Caco-2 (cell line): ENCODE measurements at regions of chr17 and their contacts with region 1.

Region 1: GRCh38 chr17:68457539-68458259 is 403 bp upstream of the WIPI1 start:
- DNase-seq: peak; percentile 99 to 100
- H3K4me3 ChIP-seq: peak overlapping the region; percentile 59
- H3K4me3 Mint-ChIP-seq: peak overlapping the region; percentile 95
- H3K27ac Mint-ChIP-seq: peak overlapping the region; percentile 84
- H3K4me1 ChIP-seq: peaks cover 16% of the 10 kb centered on the region; the same call in 1 of the 2 replicates
- H3K4me1 Mint-ChIP-seq: peaks cover 13% of the 10 kb centered on the region
- H3K27me3 ChIP-seq: no peaks in the 10 kb centered on the region
- H3K27me3 Mint-ChIP-seq: peaks cover 3% of the 10 kb centered on the region
- CTCF ChIP-seq: no peak

Region 2: GRCh38 chr17:68247445-68248198 is 210.1 kb before region 1 on chr17 and contains the start of gene AMZ2:
- CTCF ChIA-PET with region 1: interaction called, 3 read pairs
- POLR2A ChIA-PET with region 1: interaction called, 11 read pairs
- intact Hi-C with region 1: no loop called
- DNase-seq: peak; percentile 93 to 97
- H3K4me3 ChIP-seq: peak within 1 kb of the TSS; percentile 79
- H3K4me3 Mint-ChIP-seq: peak within 1 kb of the TSS; percentile 97
- H3K27ac Mint-ChIP-seq: peak within 1 kb of the TSS; percentile 81
- H3K4me1 ChIP-seq: peaks cover 6% of the 10 kb centered on the region
- H3K4me1 Mint-ChIP-seq: peaks cover 7% of the 10 kb centered on the region
- H3K27me3 ChIP-seq: no peaks in the 10 kb centered on the region
- H3K27me3 Mint-ChIP-seq: peaks cover 12% of the 10 kb centered on the region
- CTCF ChIP-seq: no peak
- total RNA-seq, gene AMZ2: 52.2 and 60.2 TPM in 2 replicates

Region 3: GRCh38 chr17:68497885-68498319 is 40.2 kb after region 1 on chr17:
- CTCF ChIA-PET with region 1: no interaction called
- POLR2A ChIA-PET with region 1: no interaction called
- intact Hi-C with region 1: no loop called
- DNase-seq: no peak
- H3K4me3 ChIP-seq: no peak overlapping the region
- H3K4me3 Mint-ChIP-seq: no peak overlapping the region
- H3K27ac Mint-ChIP-seq: no peak overlapping the region
- H3K4me1 ChIP-seq: no peaks in the 10 kb centered on the region
- H3K4me1 Mint-ChIP-seq: no peaks in the 10 kb centered on the region
- H3K27me3 ChIP-seq: peaks cover 1% of the 10 kb centered on the region; the same call in 1 of the 2 replicates
- H3K27me3 Mint-ChIP-seq: peaks cover 9% of the 10 kb centered on the region
- CTCF ChIP-seq: no peak

Region 4: DNA sequence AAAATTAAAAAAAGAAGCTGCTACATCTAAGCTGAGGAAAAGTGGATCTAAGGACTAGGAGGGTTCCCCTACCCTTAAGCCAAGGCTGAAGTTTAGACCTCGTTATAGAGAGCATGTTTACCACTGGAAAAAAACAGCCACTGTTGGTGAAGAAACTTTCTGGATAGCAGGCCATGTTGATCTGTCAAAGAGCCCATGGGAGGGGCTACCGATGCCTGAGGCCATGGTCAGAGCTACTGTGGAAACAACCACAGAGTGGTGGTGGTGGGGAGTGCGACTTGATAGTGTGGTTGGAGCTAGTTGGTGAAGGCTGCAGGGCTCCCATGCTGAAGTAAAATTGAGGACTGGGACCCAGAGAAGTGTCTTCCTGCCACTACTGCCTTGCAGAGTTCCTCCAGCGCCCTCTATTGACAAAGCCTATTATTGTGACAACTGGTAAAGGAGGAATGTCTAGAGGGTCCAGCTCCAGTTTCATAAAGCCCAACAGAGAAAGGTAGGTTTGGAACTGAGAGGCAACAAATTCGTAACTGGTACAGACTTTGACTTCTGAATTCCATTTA is 156.1 kb after region 1 on chr17:
- CTCF ChIA-PET with region 1: no interaction called
- POLR2A ChIA-PET with region 1: no interaction called
- intact Hi-C with region 1: loop called (anchors 10 kb)
- DNase-seq: peak; percentile 64 to 79
- H3K4me3 ChIP-seq: no peak overlapping the region
- H3K4me3 Mint-ChIP-seq: no peak overlapping the region
- H3K27ac Mint-ChIP-seq: no peak overlapping the region
- H3K4me1 ChIP-seq: no peaks in the 10 kb centered on the region
- H3K4me1 Mint-ChIP-seq: no peaks in the 10 kb centered on the region
- H3K27me3 ChIP-seq: no peaks in the 10 kb centered on the region; the same call in 1 of the 2 replicates
- H3K27me3 Mint-ChIP-seq: peaks cover 4% of the 10 kb centered on the region
- CTCF ChIP-seq: peak; percentile 61 to 63